ENCODE measurements at regions of chr3 and their contacts with region 1.

Region 1: GRCh38 chr3:25033407-25034029 is 394.5 kb upstream of the RARB start:
- DNase-seq: peak; percentile 29
- H3K4me3 ChIP-seq: no peak overlapping the region; a peak in 1 of 4 replicates
- H3K27ac ChIP-seq: no peak overlapping the region
- H3K4me1 ChIP-seq: peaks cover 0 to 4% of the 10 kb centered on the region in 2 experiments; a peak in 2 of 4 replicates
- H3K27me3 ChIP-seq: no peaks in the 10 kb centered on the region
- CTCF ChIP-seq: peak; percentile 62
- EP300 ChIP-seq: no peak
- RAD21 ChIP-seq: peak; percentile 50

Region 2: DNA sequence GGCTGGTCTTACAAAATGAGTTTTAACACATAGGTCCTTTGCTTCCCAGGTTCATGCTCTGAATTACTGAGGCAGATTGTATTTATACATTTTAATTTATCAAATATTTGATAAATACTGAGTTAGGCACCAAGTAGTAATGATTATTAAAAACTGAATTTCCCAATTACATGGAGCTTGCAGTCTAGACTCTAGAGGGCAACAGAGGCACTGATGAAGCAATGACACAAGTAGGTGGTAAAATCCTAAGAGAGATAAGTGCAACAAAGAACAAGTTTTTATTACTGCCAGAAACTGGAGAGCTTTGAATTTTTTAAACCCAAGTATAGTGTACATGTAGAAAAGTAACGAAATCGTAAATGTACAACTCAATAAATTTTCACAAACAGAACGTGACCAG is 11.7 kb before region 1 on chr3:
- CTCF ChIA-PET with region 1: interaction called, 11 read pairs
- POLR2A ChIA-PET with region 1: no interaction called
- DNase-seq: no peak
- H3K4me3 ChIP-seq: no peak overlapping the region
- H3K27ac ChIP-seq: no peak overlapping the region
- H3K4me1 ChIP-seq: no peaks in the 10 kb centered on the region
- H3K27me3 ChIP-seq: no peaks in the 10 kb centered on the region
- CTCF ChIP-seq: peak; percentile 64
- EP300 ChIP-seq: no peak
- RAD21 ChIP-seq: peak; percentile 64